ENCODE measurements at regions of chr4 and their contacts with region 1.

Region 1: GRCh38 chr4:51895813-51896408 is 53.0 kb downstream of the DCUN1D4 start:
- DNase-seq: peak; percentile 74
- ATAC-seq: peak; percentile 100
- H3K4me3 Mint-ChIP-seq: no peak overlapping the region
- H3K27ac Mint-ChIP-seq: peak overlapping the region; percentile 34
- H3K4me1 Mint-ChIP-seq: peaks cover 20% of the 10 kb centered on the region
- H3K27me3 Mint-ChIP-seq: no peaks in the 10 kb centered on the region
- CTCF ChIP-seq: peak; percentile 65

Region 2: GRCh38 chr4:51885363-51885762 is 10.5 kb before region 1 on chr4:
- CTCF ChIA-PET with region 1: interaction called, 16 read pairs
- POLR2A ChIA-PET with region 1: no interaction called
- intact Hi-C with region 1: no loop called
- DNase-seq: no peak
- ATAC-seq: peak; percentile 49
- H3K4me3 Mint-ChIP-seq: no peak overlapping the region
- H3K27ac Mint-ChIP-seq: no peak overlapping the region
- H3K4me1 Mint-ChIP-seq: peaks cover 5% of the 10 kb centered on the region
- H3K27me3 Mint-ChIP-seq: no peaks in the 10 kb centered on the region
- CTCF ChIP-seq: peak; percentile 42

Region 3: GRCh38 chr4:51906167-51906958 is 10.5 kb after region 1 on chr4:
- CTCF ChIA-PET with region 1: interaction called, 16 read pairs
- POLR2A ChIA-PET with region 1: no interaction called
- intact Hi-C with region 1: no loop called
- DNase-seq: peak; percentile 35
- ATAC-seq: peak; percentile 61
- H3K4me3 Mint-ChIP-seq: no peak overlapping the region
- H3K27ac Mint-ChIP-seq: peak overlapping the region; percentile 39
- H3K4me1 Mint-ChIP-seq: peaks cover 7% of the 10 kb centered on the region
- H3K27me3 Mint-ChIP-seq: no peaks in the 10 kb centered on the region
- CTCF ChIP-seq: no peak

Region 4: DNA sequence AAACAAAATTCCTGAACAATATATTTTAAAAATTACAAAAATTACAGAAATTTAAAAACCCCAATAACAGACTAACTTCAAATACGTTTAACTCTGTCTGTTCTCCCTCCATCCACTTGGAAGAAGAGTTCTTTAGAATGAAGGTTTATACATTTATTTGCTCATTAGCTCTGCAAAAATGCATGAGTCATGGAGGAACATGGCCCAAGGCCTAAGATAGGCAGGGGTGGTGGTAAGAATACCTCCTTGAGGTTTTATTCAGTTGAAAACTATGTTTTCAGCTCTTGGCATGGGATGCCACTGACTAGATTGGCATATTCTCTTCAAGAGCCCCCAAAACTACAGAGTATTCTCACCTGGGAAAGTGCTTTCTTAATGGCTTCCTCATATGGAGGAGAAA is 133.1 kb after region 1 on chr4:
- CTCF ChIA-PET with region 1: interaction called, 3 read pairs
- POLR2A ChIA-PET with region 1: no interaction called
- intact Hi-C with region 1: loop called (anchors 5 kb)
- DNase-seq: no peak
- ATAC-seq: no peak
- H3K4me3 Mint-ChIP-seq: no peak overlapping the region
- H3K27ac Mint-ChIP-seq: no peak overlapping the region
- H3K4me1 Mint-ChIP-seq: peaks cover 4% of the 10 kb centered on the region
- H3K27me3 Mint-ChIP-seq: no peaks in the 10 kb centered on the region
- CTCF ChIP-seq: no peak

Region 5: DNA sequence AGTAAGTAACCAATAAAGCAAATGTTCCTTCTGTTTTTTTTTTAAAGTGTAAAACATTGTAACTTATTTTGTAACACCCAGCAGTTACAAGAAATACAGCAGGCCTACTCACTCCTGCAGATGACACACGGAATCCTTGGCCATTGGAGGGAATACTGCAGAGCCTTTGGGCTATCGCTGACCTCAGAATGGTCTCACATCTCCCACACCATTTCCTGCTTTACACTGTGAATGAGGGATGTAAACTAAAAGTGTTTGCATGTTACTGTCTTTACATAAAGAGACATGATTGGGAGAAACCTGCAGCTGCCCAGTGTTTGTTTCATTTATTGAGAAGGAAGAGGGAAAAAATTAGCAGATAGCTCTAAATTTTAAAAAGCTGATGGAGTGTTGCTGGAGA is 699.1 kb after region 1 on chr4:
- CTCF ChIA-PET with region 1: no interaction called
- POLR2A ChIA-PET with region 1: no interaction called
- intact Hi-C with region 1: no loop called
- DNase-seq: no peak
- ATAC-seq: no peak
- H3K4me3 Mint-ChIP-seq: no peak overlapping the region
- H3K27ac Mint-ChIP-seq: no peak overlapping the region
- H3K4me1 Mint-ChIP-seq: no peaks in the 10 kb centered on the region
- H3K27me3 Mint-ChIP-seq: no peaks in the 10 kb centered on the region
- CTCF ChIP-seq: no peak

Measured in activated CD8-positive, alpha-beta T cell treated with anti-CD3 and anti-CD28 coated beads for 36 hours (primary cell).